Activated naive CD4-positive, alpha-beta T cell treated with anti-CD3 and anti-CD28 coated beads, Interleukin-2, amount 10 ng/mL, durations not matched to agents 7 days and 5 days (primary cell): ENCODE measurements at regions of chr2 and their contacts with region 1.

Region 1: GRCh38 chr2:85728883-85729824 is 24.6 kb upstream of the ATOH8 start:
- DNase-seq: peak; percentile 82
- H3K4me3 Mint-ChIP-seq: no peak overlapping the region
- H3K27ac Mint-ChIP-seq: no peak overlapping the region
- H3K4me1 Mint-ChIP-seq: peaks cover 3% of the 10 kb centered on the region
- H3K27me3 Mint-ChIP-seq: peaks cover 66% of the 10 kb centered on the region

Region 2: GRCh38 chr2:85741833-85742455 is 12.8 kb after region 1 on chr2:
- CTCF ChIA-PET with region 1: interaction called, 15 read pairs
- DNase-seq: no peak
- H3K4me3 Mint-ChIP-seq: no peak overlapping the region
- H3K27ac Mint-ChIP-seq: no peak overlapping the region
- H3K4me1 Mint-ChIP-seq: no peaks in the 10 kb centered on the region
- H3K27me3 Mint-ChIP-seq: peaks cover 95% of the 10 kb centered on the region

Region 3: GRCh38 chr2:85750587-85751575 is 21.7 kb after region 1 on chr2:
- CTCF ChIA-PET with region 1: interaction called, 14 read pairs
- DNase-seq: peak; percentile 78
- H3K4me3 Mint-ChIP-seq: no peak overlapping the region
- H3K27ac Mint-ChIP-seq: no peak overlapping the region
- H3K4me1 Mint-ChIP-seq: peaks cover 17% of the 10 kb centered on the region
- H3K27me3 Mint-ChIP-seq: peaks cover 100% of the 10 kb centered on the region